ENCODE measurements at regions of chr2 and their contacts with region 1.

Region 1: DNA sequence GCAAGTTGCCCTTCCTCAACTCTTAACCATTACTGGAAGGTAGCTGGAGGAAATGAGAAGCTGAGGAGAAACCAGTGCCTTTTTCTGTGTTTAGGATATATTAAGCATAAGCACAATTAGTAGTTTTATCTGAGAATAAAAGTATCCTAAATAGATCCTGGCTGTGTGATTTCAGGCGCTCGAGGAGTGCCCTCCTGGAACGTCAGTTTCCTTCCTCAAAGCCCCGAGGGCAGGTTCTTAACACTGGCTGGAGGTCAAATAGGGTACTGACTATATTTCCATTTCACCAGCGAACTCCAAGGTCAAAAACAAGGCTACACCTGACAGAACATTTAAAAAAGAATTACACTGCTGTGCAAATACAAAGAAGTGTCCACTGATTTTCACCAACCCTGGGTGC is 1.5 kb upstream of the STON1 start:
- DNase-seq: no peak
- ATAC-seq: no peak
- H3K4me3 ChIP-seq: no peak overlapping the region
- H3K4me3 Mint-ChIP-seq: peak overlapping the region in 8 of 10 donors; percentile 12 to 89 (median 80)
- H3K27ac ChIP-seq: no peak overlapping the region
- H3K27ac Mint-ChIP-seq: peak overlapping the region in 3 of 9 donors; percentile 22 to 46 (median 45)
- H3K4me1 ChIP-seq: no peaks in the 10 kb centered on the region
- H3K4me1 Mint-ChIP-seq: peaks cover 5 to 17% (median 14%) of the 10 kb centered on the region in 7 donors
- H3K27me3 ChIP-seq: no peaks in the 10 kb centered on the region
- H3K27me3 Mint-ChIP-seq: peaks cover 0 to 15% (median 0%) of the 10 kb centered on the region in 5 donors

Region 2: GRCh38 chr2:48442610-48443360 is 85.7 kb before region 1 on chr2:
- CTCF ChIA-PET with region 1: no interaction called
- POLR2A ChIA-PET with region 1: no interaction called
- intact Hi-C with region 1: loop called in 1 of 2 experiments (anchors 1 kb)
- DNase-seq: no peak
- ATAC-seq: no peak
- H3K4me3 ChIP-seq: no peak overlapping the region
- H3K4me3 Mint-ChIP-seq: no peak overlapping the region
- H3K27ac ChIP-seq: no peak overlapping the region
- H3K27ac Mint-ChIP-seq: no peak overlapping the region
- H3K4me1 ChIP-seq: peaks cover 7 to 38% of the 10 kb centered on the region in 2 donors
- H3K4me1 Mint-ChIP-seq: peaks cover 4 to 34% (median 21%) of the 10 kb centered on the region in 7 donors
- H3K27me3 ChIP-seq: no peaks in the 10 kb centered on the region
- H3K27me3 Mint-ChIP-seq: peaks cover 0 to 4% (median 0%) of the 10 kb centered on the region in 5 donors

Region 3: DNA sequence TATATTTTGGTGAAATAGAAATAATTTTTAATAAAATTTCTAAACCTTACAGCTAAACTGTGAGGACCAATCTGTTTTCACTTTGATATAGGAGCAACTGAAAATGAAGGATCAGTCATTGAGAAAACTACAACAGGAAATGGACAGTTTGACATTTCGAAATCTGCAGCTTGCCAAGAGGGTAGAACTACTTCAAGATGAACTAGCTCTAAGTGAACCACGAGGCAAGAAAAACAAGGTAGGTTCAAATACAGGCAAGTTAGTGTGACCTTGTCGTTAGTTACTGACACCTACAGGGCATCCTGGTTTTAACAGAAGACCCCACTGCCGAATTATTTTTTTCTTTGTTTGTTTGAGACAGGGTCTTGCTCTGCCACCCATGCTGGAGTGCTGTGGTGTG is 73.9 kb before region 1 on chr2:
- CTCF ChIA-PET with region 1: no interaction called
- POLR2A ChIA-PET with region 1: no interaction called
- intact Hi-C with region 1: no loop called
- DNase-seq: no peak
- ATAC-seq: no peak
- H3K4me3 ChIP-seq: no peak overlapping the region
- H3K4me3 Mint-ChIP-seq: no peak overlapping the region
- H3K27ac ChIP-seq: no peak overlapping the region
- H3K27ac Mint-ChIP-seq: no peak overlapping the region
- H3K4me1 ChIP-seq: peaks cover 5 to 16% of the 10 kb centered on the region in 2 donors
- H3K4me1 Mint-ChIP-seq: peaks cover 7 to 38% (median 27%) of the 10 kb centered on the region in 7 donors
- H3K27me3 ChIP-seq: no peaks in the 10 kb centered on the region
- H3K27me3 Mint-ChIP-seq: no peaks in the 10 kb centered on the region